ENCODE measurements at regions of chr15 and their contacts with region 1.

Region 1: DNA sequence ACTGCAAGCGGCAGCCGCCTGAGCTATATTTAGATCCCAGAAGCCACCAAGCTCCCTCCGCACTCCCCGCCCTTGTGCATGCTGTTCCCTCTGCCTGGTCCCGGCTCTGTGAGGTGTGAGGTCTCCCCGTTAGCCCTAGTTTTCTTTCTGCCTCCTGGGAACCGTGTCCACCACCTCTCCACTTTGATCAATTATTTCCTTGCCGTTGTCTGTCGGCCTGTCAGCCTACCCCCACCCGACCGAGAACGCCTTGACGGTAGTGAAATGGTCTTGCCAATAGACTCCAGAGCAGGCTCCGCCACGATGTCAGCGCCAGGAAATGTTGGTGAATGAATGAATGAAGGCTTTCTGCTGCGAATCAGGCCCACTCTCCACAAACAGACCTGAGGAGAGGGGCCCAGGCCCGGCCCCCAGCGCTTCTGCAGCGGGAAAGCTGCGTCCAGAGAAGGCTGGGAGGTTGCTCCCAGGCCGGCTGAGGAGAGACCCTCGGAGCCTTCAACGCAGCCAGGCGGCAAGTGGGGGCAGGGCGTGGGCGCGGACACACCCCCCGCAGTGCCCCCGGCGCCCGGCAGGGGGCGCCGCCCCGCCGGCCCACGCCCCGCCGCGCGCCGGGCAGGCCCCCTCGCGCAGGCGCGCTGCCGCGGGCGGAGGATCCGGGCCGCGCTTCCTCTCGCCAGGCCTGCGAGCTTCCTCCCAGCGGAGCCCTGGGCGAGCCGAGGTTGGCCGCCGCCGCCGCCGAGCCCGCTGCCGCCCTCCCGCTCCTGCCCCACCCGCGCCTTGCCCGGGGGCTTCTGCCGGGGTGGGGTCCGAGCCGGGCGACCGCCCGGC is at the start of gene CSK:
- DNase-seq: peak; percentile 35 to 60
- ATAC-seq: peak; percentile 77 to 84
- H3K4me3 ChIP-seq: peak within 1 kb of the TSS; percentile 71 to 83 (median 78)
- H3K27ac ChIP-seq: peak within 1 kb of the TSS; percentile 70 to 84 (median 80)
- H3K4me1 ChIP-seq: peaks cover 54 to 57% of the 10 kb centered on the region in 2 donors
- H3K27me3 ChIP-seq: no peaks in the 10 kb centered on the region
- CTCF ChIP-seq: peak; percentile 59 to 90 (median 81)
- POLR2A ChIP-seq: peak; percentile 59 to 76
- total RNA-seq, gene CSK: 6.4 to 11.7 (median 10.8) TPM

Region 2: DNA sequence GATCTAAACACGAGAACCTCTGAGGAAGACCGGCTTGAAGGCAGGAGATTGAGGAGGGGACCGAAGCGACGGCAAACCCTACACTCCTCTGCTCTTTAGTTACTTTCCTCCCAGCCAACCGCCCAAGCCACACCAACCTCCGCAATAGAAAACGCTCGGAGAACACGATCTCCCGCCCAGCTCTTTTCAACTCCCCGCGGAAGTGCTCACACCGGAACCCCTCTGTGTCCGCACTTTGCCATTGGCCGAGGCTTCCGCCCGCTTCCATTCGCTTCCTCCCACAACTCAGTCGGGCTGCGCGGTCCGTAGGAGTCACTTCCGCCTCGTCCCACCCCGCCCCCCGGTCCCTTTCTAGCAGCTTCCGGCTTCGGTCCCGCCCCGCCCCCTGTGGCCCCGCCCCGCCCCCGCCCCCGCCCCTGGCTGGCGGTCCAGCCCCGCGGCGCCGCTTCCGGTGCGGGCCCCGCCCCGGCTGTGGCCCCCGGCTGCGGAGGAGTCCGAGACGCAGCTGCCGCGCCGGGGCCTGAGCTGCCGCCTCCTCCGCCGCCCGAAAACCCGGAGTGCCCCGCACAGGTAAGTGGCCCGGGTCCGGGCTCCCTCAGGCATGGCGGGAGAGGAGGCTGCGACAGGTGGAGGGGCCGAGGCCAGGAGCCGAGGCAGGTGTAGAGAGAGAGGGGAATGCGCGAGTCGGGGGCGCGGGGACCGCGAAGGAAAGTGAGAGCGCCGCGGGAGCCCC is 240.7 kb before region 1 on chr15 and contains the start of gene ARID3B:
- in situ Hi-C with region 1: no loop called
- intact Hi-C with region 1: loop called (anchors 10 kb)
- DNase-seq: peak; percentile 97
- ATAC-seq: peak; percentile 96 to 99
- H3K4me3 ChIP-seq: peak within 1 kb of the TSS; percentile 79 to 100 (median 91)
- H3K27ac ChIP-seq: peak within 1 kb of the TSS; percentile 81 to 90 (median 86)
- H3K4me1 ChIP-seq: peaks cover 22 to 24% of the 10 kb centered on the region in 2 donors
- H3K27me3 ChIP-seq: no peaks in the 10 kb centered on the region
- CTCF ChIP-seq: no peak
- POLR2A ChIP-seq: peak; percentile 64 to 77
- total RNA-seq, gene ARID3B: 1.8 to 6.7 (median 4.6) TPM

Region 3: DNA sequence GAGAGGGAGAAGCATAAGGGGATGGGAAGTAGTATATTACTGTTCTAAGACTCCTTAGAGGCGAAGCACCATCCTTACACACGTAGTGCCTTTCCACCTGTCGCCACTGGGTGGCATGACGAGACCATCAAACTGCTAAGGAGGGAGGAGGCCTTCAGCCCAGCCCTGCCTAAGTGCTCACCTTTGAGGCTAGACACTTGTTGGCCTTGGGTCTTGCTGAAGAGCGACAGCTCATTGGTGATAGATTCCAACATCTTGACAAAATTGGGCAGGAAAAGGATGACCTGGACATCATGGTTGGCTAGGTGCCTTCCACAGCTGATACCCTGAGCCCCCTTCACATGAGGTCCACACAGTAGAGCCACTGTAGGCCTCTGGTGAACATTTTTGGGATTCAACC is 146.4 kb before region 1 on chr15:
- in situ Hi-C with region 1: loop called in 2 of 4 experiments (anchors 10 kb)
- intact Hi-C with region 1: no loop called
- DNase-seq: peak in 1 of 2 donors; percentile 51
- ATAC-seq: peak; percentile 64 to 73
- H3K4me3 ChIP-seq: no peak overlapping the region
- H3K27ac ChIP-seq: no peak overlapping the region
- H3K4me1 ChIP-seq: peaks cover 0 to 4% of the 10 kb centered on the region in 2 donors
- H3K27me3 ChIP-seq: no peaks in the 10 kb centered on the region
- CTCF ChIP-seq: peak; percentile 83 to 89 (median 85)
- POLR2A ChIP-seq: no peak

Region 4: GRCh38 chr15:74799856-74800547 is 18.4 kb after region 1 on chr15:
- in situ Hi-C with region 1: no loop called
- intact Hi-C with region 1: loop called (anchors 1 kb)
- DNase-seq: peak; percentile 52 to 71
- ATAC-seq: peak; percentile 69 to 85
- H3K4me3 ChIP-seq: no peak overlapping the region
- H3K27ac ChIP-seq: peak overlapping the region; percentile 71 to 84 (median 75)
- H3K4me1 ChIP-seq: peaks cover 23 to 24% of the 10 kb centered on the region in 2 donors
- H3K27me3 ChIP-seq: no peaks in the 10 kb centered on the region
- CTCF ChIP-seq: peak; percentile 92 to 99 (median 98)
- POLR2A ChIP-seq: no peak

Region 5: GRCh38 chr15:74842581-74843444 is 61.2 kb after region 1 on chr15 and contains the start of gene ULK3:
- in situ Hi-C with region 1: loop called in 1 of 4 experiments (anchors 5 kb)
- intact Hi-C with region 1: loop called (anchors 5 kb)
- DNase-seq: peak; percentile 88 to 92
- ATAC-seq: peak; percentile 87 to 92
- H3K4me3 ChIP-seq: peak within 1 kb of the TSS; percentile 77 to 93 (median 86)
- H3K27ac ChIP-seq: peak within 1 kb of the TSS; percentile 91 to 98 (median 95)
- H3K4me1 ChIP-seq: peaks cover 0 to 24% of the 10 kb centered on the region in 2 donors
- H3K27me3 ChIP-seq: no peaks in the 10 kb centered on the region
- CTCF ChIP-seq: peak; percentile 63 to 96 (median 94)
- POLR2A ChIP-seq: peak; percentile 76 to 77
- total RNA-seq, gene ULK3: 39.0 to 56.5 (median 48.1) TPM

Region 6: GRCh38 chr15:74937596-74938296 is 156.1 kb after region 1 on chr15 and contains the start of gene COX5A:
- in situ Hi-C with region 1: loop called in 2 of 4 experiments (anchors 10 kb)
- intact Hi-C with region 1: loop called (anchors 5 kb)
- DNase-seq: peak; percentile 92 to 96
- ATAC-seq: peak; percentile 94 to 95
- H3K4me3 ChIP-seq: peak within 1 kb of the TSS; percentile 74 to 93 (median 90)
- H3K27ac ChIP-seq: peak within 1 kb of the TSS; percentile 96 to 100 (median 96)
- H3K4me1 ChIP-seq: peaks cover 32 to 35% of the 10 kb centered on the region in 2 donors
- H3K27me3 ChIP-seq: no peaks in the 10 kb centered on the region
- CTCF ChIP-seq: peak in 1 of 5 experiments; percentile 17
- POLR2A ChIP-seq: peak; percentile 91 to 93
- total RNA-seq, gene COX5A: 425 to 558 (median 512) TPM

Region 7: GRCh38 chr15:74950078-74951000 is 168.7 kb after region 1 on chr15:
- in situ Hi-C with region 1: loop called in 3 of 4 experiments (anchors 5 to 10 kb)
- intact Hi-C with region 1: no loop called
- DNase-seq: peak; percentile 36 to 64
- ATAC-seq: peak; percentile 90 to 92
- H3K4me3 ChIP-seq: no peak overlapping the region
- H3K27ac ChIP-seq: no peak overlapping the region
- H3K4me1 ChIP-seq: no peaks in the 10 kb centered on the region
- H3K27me3 ChIP-seq: peaks cover 6 to 12% (median 7%) of the 10 kb centered on the region in 3 donors
- CTCF ChIP-seq: peak; percentile 95 to 99 (median 97)
- POLR2A ChIP-seq: no peak

Measured in gastrocnemius medialis (tissue), 4 donors.